CD4-positive, alpha-beta T cell (primary cell): ENCODE measurements at regions of chr1 and their contacts with region 1.

Region 1: DNA sequence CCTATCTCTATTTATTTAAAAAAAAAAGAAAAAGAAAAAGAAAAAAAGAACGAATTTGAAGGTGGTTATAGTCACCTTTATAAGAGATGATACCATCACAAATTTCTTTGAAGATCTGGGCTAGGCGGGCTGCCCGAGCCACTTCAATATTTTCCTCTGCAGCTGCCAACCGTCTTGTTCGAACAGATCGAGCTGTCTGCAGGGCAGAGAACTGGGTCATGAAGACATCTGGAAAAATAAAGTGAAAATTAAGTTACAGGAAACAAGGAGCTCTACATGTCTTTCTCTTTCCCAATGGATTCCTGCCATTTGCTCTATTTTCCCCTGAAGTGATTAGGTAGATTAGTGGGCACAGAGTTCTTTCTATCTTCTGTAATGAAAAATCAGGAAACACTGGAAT is 31.9 kb downstream of the RUSC1 start:
- DNase-seq: no peak
- ATAC-seq: no peak
- H3K4me3 ChIP-seq: no peak overlapping the region
- H3K4me3 Mint-ChIP-seq: no peak overlapping the region
- H3K27ac ChIP-seq: no peak overlapping the region
- H3K27ac Mint-ChIP-seq: no peak overlapping the region
- H3K4me1 ChIP-seq: no peaks in the 10 kb centered on the region
- H3K4me1 Mint-ChIP-seq: no peaks in the 10 kb centered on the region
- H3K27me3 ChIP-seq: no peaks in the 10 kb centered on the region
- H3K27me3 Mint-ChIP-seq: no peaks in the 10 kb centered on the region
- CTCF ChIP-seq: no peak

Region 2: GRCh38 chr1:155392898-155393411 is 40.3 kb after region 1 on chr1:
- CTCF ChIA-PET with region 1: no interaction called
- POLR2A ChIA-PET with region 1: no interaction called
- intact Hi-C with region 1: no loop called
- DNase-seq: no peak
- ATAC-seq: no peak
- H3K4me3 ChIP-seq: no peak overlapping the region
- H3K4me3 Mint-ChIP-seq: no peak overlapping the region
- H3K27ac ChIP-seq: no peak overlapping the region
- H3K27ac Mint-ChIP-seq: no peak overlapping the region
- H3K4me1 ChIP-seq: no peaks in the 10 kb centered on the region
- H3K4me1 Mint-ChIP-seq: no peaks in the 10 kb centered on the region
- H3K27me3 ChIP-seq: no peaks in the 10 kb centered on the region
- H3K27me3 Mint-ChIP-seq: no peaks in the 10 kb centered on the region
- CTCF ChIP-seq: no peak

Region 3: DNA sequence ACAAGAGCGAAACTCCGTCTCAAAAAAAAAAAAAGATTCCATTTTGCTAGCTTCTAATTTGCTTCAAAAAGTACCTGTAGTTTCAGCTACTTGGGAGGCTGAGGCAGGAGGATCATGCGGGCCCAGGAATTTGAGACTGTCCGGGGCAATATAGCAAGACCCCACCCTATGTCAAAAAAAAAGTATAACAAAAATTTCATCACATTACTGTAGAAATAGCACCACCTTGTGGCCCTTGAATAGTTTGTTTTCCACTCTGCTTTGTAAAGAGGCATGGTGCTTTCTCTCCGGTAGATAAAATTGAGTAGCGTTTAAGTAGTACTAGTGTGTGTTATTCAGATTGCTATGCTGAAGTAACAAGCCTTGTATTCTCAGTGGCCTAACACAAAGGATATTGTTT is 239.1 kb after region 1 on chr1:
- CTCF ChIA-PET with region 1: interaction called, 3 read pairs
- POLR2A ChIA-PET with region 1: no interaction called
- intact Hi-C with region 1: loop called in 1 of 2 experiments (anchors 10 kb)
- DNase-seq: peak in 6 of 14 experiments; percentile 7 to 78 (median 64)
- ATAC-seq: peak; percentile 72
- H3K4me3 ChIP-seq: no peak overlapping the region
- H3K4me3 Mint-ChIP-seq: no peak overlapping the region
- H3K27ac ChIP-seq: no peak overlapping the region
- H3K27ac Mint-ChIP-seq: no peak overlapping the region
- H3K4me1 ChIP-seq: no peaks in the 10 kb centered on the region
- H3K4me1 Mint-ChIP-seq: peaks cover 5% of the 10 kb centered on the region
- H3K27me3 ChIP-seq: no peaks in the 10 kb centered on the region
- H3K27me3 Mint-ChIP-seq: no peaks in the 10 kb centered on the region
- CTCF ChIP-seq: peak; percentile 63